ENCODE measurements at regions of chr9 and their contacts with region 1.

Region 1: DNA sequence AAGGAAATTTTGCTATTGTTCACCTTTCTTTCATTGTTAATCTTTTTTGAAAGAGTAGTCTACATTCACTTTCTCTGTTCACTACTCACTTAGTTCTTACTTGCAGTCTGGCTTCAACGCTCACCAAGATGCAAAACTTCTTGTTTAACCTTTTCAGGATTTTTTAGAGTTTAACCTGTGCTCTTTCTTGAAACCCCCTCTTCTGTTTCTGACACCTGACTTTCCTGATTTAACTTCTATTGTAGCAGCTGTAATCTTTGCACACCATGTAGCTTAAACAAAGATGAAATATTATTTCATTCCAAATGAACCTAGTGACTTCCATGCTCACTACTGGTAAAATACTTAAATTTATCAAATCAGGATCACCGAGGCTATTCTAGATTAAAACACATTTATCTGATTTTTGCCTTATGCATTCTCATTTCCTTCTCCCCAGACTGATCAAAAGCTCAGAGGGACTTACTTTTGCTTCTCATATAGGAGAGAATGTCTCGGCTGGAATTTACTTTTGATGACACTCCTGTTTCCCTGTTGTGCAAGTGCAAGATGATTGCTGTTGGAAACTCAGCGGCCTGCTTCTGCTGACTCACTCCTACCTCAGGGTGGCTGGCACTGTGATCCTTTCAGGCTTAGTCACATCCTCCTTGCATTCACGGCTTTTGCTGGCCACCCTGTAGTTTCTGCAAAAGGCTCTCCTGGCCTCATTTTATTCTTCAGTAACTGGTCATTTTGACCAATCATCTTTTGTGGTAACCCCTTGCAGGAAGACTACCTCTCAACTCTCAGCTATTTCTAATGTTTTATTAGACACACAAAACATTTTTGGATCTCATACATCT is 109.3 kb upstream of the IFNE start:
- DNase-seq: no peak
- ATAC-seq: peak in 2 of 8 donors; percentile 42 to 92
- H3K4me3 ChIP-seq: no peak overlapping the region
- H3K27ac ChIP-seq: peak overlapping the region in 1 of 10 donors; percentile 36
- H3K4me1 ChIP-seq: peaks cover 0 to 8% (median 0%) of the 10 kb centered on the region in 9 donors
- H3K27me3 ChIP-seq: peaks cover 0 to 14% (median 0%) of the 10 kb centered on the region in 7 donors
- CTCF ChIP-seq: no peak

Region 2: GRCh38 chr9:21638104-21638503 is 46.7 kb after region 1 on chr9:
- intact Hi-C with region 1: loop called in 2 of 10 experiments (anchors 5 to 10 kb)
- DNase-seq: no peak
- ATAC-seq: no peak
- H3K4me3 ChIP-seq: no peak overlapping the region
- H3K27ac ChIP-seq: no peak overlapping the region
- H3K4me1 ChIP-seq: no peaks in the 10 kb centered on the region
- H3K27me3 ChIP-seq: no peaks in the 10 kb centered on the region
- CTCF ChIP-seq: no peak

Region 3: GRCh38 chr9:21653091-21653490 is 61.6 kb after region 1 on chr9:
- intact Hi-C with region 1: loop called in 1 of 10 experiments (anchors 10 kb)
- DNase-seq: no peak
- ATAC-seq: no peak
- H3K4me3 ChIP-seq: no peak overlapping the region
- H3K27ac ChIP-seq: no peak overlapping the region
- H3K4me1 ChIP-seq: no peaks in the 10 kb centered on the region
- H3K27me3 ChIP-seq: no peaks in the 10 kb centered on the region
- CTCF ChIP-seq: no peak

Measured in heart right ventricle (tissue), 16 donors.